ENCODE measurements at regions of chr5 and their contacts with region 1.

Region 1: DNA sequence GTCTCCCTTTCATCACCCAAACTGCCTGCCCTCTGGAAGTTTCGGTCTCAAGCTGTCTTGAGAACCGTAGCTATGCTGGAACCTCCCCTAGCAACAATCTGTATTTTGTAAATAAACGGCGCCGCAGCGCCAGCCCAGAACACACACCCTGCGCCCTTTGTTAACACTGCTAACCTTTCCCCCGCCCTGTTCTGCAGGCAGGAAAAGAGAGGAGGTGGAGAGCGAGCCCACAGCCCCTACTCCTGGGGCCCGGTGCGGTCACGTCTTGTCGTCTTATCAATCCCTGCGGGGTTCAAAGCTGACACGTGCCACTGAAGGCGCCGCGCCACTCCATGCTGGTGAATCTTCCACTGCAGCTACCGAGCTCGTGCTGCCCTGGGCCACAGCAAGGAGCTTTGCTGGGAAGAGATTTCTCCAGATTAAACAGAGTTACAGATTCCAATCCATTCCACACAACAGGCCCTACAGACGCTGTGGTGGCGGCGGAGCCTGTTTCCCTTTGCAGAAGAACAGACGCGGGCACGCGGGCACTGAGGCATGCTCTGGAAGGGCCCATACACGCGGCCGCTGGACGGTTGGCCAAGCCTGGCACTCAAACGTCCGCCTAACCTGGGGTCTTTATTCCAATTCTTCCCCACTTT is 25.3 kb downstream of the ZDHHC11B start:
- DNase-seq: peak; percentile 96

Region 2: DNA sequence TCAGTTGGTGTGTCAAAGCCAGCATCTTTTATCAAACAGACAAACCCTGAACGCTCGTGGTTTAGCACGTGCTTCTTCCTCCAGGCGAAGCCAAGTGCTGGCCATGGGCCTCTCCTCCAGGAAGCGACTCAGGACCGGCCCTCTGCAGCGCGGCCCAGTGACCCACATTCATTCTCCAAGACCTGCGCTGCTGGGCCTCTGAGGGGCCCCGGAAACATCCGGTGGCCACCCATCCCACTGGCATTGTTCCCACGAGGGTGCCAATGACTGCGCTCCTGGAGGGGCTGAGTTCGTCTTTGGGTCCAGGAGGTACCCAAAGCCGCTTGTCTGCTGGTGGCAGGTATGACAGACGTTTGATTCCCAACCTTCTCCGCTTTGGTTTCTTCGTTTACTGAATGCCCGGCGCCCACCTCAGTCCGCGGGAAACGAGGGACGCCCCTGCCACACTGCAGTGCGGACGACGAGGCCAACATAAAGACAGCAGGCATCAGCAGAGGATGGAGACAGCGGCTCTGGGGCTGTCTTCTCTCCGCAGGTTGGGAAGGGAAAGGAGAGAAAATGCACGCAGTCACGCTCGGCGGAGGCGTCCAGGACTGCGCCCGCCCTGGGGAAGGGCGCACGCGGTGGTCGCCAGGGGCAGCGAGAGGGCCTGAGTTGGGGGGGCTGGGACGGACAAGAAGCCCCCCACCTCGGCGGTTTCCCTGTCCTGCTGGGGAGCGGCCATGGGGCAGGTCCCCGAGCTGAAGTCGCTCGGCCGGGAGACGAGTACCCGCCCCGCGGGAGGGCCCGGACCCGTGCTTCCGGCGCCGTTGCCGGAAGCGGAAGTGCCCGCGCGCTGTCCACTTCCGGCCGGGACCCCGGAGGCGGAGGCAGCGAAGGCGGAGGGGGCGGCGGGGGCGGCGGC is 316.6 kb before region 1 on chr5 and contains the start of gene EXOC3:
- intact Hi-C with region 1: no loop called
- DNase-seq: peak; percentile 90
- total RNA-seq, gene EXOC3: 52.6 to 54.2 TPM

Region 3: GRCh38 chr5:691817-692528 is 67.3 kb before region 1 on chr5:
- intact Hi-C with region 1: loop called in 1 of 2 experiments (anchors 10 kb)
- DNase-seq: no peak

Region 4: DNA sequence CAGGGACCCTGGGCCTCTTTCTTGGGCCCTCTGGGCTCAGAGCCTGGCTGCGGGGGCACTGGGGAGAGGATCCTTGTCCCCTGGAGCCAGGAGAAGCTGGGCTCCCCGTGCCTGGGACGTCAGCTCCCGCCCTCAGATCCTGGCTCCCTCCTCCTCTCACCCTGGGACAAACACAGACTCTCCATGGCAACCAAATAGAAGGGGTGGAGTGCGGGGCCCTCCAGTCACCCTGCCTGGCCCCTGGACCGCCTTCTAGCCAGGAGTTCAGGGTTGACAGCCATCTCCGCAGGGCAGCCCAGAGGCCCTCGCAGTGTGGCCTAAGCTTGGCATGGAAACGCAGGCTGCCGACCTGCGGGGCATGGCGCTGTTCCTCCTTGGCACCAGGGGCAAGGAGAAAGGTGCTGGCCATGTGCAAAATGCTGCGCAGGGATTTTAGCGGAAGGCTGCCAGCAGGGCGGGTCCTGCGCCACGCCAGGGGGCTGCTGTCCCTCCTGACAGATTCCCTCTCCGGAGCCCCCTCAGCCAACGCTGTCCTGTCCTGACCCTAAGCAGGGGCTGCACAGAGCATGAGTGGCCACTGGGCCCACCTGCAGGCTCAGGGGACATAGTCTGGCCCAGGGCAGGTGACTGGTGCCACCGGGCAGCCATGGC is 90.5 kb after region 1 on chr5:
- intact Hi-C with region 1: loop called in 1 of 2 experiments (anchors 5 kb)
- DNase-seq: peak; percentile 88